ENCODE measurements at regions of chr10 and their contacts with region 1.

Region 1: GRCh38 chr10:71339799-71340589 is 20.9 kb downstream of the SLC29A3 start:
- DNase-seq: no peak
- CTCF ChIP-seq: no peak

Region 2: DNA sequence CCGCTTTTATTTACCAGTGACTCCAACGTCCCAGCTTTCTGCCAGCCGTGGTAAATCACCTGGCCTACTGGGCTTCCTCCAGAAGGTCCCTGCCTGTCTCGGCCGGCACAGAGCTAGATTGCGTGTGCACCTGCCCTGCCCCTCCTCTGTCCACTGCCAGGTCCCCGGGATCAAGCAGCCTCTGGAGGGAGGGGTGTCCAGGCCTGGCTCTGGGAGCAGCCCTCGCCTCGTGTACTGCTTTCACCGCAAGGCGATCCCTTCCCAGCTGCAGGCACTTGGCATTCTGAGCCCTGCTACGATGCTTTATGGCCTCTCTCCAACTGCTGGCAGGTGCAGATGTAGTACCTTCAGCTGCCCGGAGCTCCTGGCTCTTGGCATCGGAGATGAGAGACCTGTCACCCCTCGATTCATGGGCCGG is 13.5 kb before region 1 on chr10:
- CTCF ChIA-PET with region 1: interaction called, 155 read pairs
- POLR2A ChIA-PET with region 1: no interaction called
- DNase-seq: no peak
- CTCF ChIP-seq: no peak

Measured in GM10248 (cell line).